ENCODE measurements at regions of chr17 and their contacts with region 1.

Region 1: DNA sequence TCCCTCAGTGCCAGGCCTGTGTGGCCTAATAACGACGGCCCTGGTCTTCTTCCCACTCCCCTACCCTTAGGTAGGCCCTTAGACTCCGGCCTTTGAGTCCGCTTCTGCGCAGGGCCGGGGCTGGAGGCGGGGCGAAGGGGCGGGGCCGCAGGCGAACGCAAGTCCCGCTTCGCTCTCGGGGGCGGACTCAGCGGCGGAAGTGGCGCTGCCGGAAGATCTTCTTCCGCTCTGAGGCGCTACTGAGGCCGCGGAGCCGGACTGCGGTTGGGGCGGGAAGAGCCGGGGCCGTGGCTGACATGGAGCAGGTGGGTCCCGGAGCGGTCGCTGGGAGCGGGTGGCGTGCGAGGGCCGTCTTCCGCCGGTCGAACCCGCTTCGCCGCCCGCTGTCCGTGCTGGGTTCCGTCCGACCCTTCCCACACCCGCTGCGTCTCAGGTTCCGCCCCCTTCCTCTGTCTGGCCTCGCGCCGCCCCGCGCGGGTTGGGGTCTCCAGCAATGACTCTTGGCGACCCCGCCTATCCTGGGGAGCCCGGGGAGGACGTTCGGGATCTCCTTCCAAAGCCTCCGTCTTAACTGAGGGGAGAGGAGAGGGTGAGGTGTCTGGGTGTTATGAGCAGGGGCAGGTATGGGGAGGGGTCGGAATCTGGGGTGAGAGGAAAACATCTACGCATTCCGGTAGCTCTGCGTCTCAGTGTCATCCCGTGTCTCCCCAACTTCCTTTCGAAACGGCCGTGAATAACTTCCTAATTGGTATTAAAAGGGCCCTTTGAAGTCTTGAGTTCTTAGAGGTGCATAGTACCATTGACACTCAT is at the start of gene STARD3:
- DNase-seq: peak; percentile 79
- H3K4me3 ChIP-seq: peak within 1 kb of the TSS; percentile 65 to 91 (median 76)
- H3K27ac ChIP-seq: peak within 1 kb of the TSS; percentile 55
- H3K4me1 ChIP-seq: peaks cover 16% of the 10 kb centered on the region
- H3K27me3 ChIP-seq: no peaks in the 10 kb centered on the region
- CTCF ChIP-seq: peak in 1 of 2 donors; percentile 37
- total RNA-seq, gene STARD3: 20.2 to 35.7 TPM

Region 2: DNA sequence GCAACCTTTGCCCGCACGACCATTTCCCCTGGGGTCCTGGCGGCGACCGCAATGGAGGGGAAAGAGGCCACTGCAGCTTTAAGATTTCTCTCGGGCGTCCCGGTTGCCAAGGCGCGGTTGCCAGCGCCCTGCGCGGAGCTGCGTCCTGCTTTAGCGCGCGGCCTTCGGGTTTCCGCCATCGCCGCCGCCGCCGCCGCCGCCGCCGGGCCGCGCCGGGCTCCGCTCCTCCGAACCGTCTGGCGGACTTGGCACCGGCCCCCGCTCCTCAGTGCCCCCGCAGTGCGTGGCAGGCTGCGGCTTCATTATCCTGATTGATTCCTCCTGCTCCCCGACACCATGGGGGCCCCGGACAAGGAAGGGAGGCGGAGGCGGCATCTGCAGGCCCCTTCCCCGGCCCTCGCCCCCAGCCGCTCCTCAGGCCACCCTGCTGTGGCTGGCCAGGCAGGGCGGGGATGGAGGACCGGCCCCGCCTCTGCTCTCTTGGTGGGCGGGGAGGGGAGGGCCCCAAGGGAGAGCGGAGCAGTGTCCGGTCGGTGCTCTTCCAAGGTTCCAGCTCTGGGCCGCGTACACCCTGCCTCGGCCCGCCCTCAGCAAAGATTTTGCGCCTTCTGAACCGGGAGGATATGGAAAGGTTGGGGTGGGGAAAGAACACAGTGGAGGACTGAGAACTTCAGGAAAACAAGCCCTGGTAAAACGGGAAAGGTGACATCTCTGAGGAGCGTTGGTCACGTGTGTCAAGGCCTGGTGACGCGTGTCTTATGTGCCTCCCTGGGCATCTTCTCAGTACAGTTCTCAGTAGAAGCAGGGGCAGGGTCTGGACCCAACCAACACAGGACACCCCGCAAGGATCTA is 63.5 kb before region 1 on chr17:
- CTCF ChIA-PET with region 1: no interaction called
- dilution Hi-C with region 1: no loop called
- in situ Hi-C with region 1: no loop called
- intact Hi-C with region 1: no loop called
- DNase-seq: peak; percentile 67
- H3K4me3 ChIP-seq: peak overlapping the region; percentile 52 to 61 (median 57)
- H3K27ac ChIP-seq: peak overlapping the region; percentile 48
- H3K4me1 ChIP-seq: peaks cover 4% of the 10 kb centered on the region
- H3K27me3 ChIP-seq: no peaks in the 10 kb centered on the region
- CTCF ChIP-seq: no peak

Region 3: GRCh38 chr17:39653662-39654331 is 16.7 kb after region 1 on chr17:
- CTCF ChIA-PET with region 1: no interaction called
- dilution Hi-C with region 1: no loop called
- in situ Hi-C with region 1: no loop called
- intact Hi-C with region 1: no loop called
- DNase-seq: no peak
- H3K4me3 ChIP-seq: no peak overlapping the region
- H3K27ac ChIP-seq: no peak overlapping the region
- H3K4me1 ChIP-seq: no peaks in the 10 kb centered on the region
- H3K27me3 ChIP-seq: no peaks in the 10 kb centered on the region
- CTCF ChIP-seq: peak; percentile 90 to 95

Region 4: GRCh38 chr17:39671651-39672521 is 34.8 kb after region 1 on chr17:
- CTCF ChIA-PET with region 1: interaction called, 5 read pairs
- dilution Hi-C with region 1: loop called (anchors 5 kb)
- in situ Hi-C with region 1: no loop called
- intact Hi-C with region 1: no loop called
- DNase-seq: peak; percentile 15
- H3K4me3 ChIP-seq: no peak overlapping the region
- H3K27ac ChIP-seq: no peak overlapping the region
- H3K4me1 ChIP-seq: peaks cover 8% of the 10 kb centered on the region
- H3K27me3 ChIP-seq: no peaks in the 10 kb centered on the region
- CTCF ChIP-seq: peak; percentile 22 to 56

Region 5: DNA sequence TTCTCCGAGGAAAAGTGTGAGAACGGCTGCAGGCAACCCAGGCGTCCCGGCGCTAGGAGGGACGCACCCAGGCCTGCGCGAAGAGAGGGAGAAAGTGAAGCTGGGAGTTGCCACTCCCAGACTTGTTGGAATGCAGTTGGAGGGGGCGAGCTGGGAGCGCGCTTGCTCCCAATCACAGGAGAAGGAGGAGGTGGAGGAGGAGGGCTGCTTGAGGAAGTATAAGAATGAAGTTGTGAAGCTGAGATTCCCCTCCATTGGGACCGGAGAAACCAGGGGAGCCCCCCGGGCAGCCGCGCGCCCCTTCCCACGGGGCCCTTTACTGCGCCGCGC is 62.7 kb after region 1 on chr17 and contains the start of gene ERBB2:
- CTCF ChIA-PET with region 1: no interaction called
- dilution Hi-C with region 1: no loop called
- in situ Hi-C with region 1: no loop called
- intact Hi-C with region 1: loop called (anchors 5 kb)
- DNase-seq: peak; percentile 74
- H3K4me3 ChIP-seq: peak within 1 kb of the TSS; percentile 84 to 91 (median 86)
- H3K27ac ChIP-seq: peak within 1 kb of the TSS; percentile 52
- H3K4me1 ChIP-seq: peaks cover 18% of the 10 kb centered on the region
- H3K27me3 ChIP-seq: no peaks in the 10 kb centered on the region
- CTCF ChIP-seq: no peak
- total RNA-seq, gene ERBB2: 54.3 to 66.5 TPM

Region 6: GRCh38 chr17:39835038-39835786 is 198.1 kb after region 1 on chr17:
- CTCF ChIA-PET with region 1: no interaction called
- dilution Hi-C with region 1: loop called (anchors 10 kb)
- in situ Hi-C with region 1: no loop called
- intact Hi-C with region 1: no loop called
- DNase-seq: no peak
- H3K4me3 ChIP-seq: no peak overlapping the region
- H3K27ac ChIP-seq: no peak overlapping the region
- H3K4me1 ChIP-seq: no peaks in the 10 kb centered on the region
- H3K27me3 ChIP-seq: no peaks in the 10 kb centered on the region
- CTCF ChIP-seq: no peak

Region 7: GRCh38 chr17:41406205-41406604 is 1769.1 kb after region 1 on chr17:
- CTCF ChIA-PET with region 1: no interaction called
- dilution Hi-C with region 1: no loop called
- in situ Hi-C with region 1: no loop called
- intact Hi-C with region 1: no loop called
- DNase-seq: peak; percentile 67
- H3K4me3 ChIP-seq: no peak overlapping the region
- H3K27ac ChIP-seq: no peak overlapping the region
- H3K4me1 ChIP-seq: peaks cover 32% of the 10 kb centered on the region
- H3K27me3 ChIP-seq: no peaks in the 10 kb centered on the region
- CTCF ChIP-seq: peak; percentile 36 to 67